Esophagus muscularis mucosa (tissue), 4 donors: ENCODE measurements at regions of chr6 and their contacts with region 1.

Region 1: GRCh38 chr6:139334806-139335446 is 39.5 kb downstream of the CITED2 start:
- DNase-seq: no peak
- H3K4me3 ChIP-seq: no peak overlapping the region
- H3K27ac ChIP-seq: peak overlapping the region; percentile 6 to 60 (median 50)
- H3K4me1 ChIP-seq: peaks cover 2 to 26% (median 20%) of the 10 kb centered on the region in 4 donors
- H3K27me3 ChIP-seq: no peaks in the 10 kb centered on the region
- CTCF ChIP-seq: no peak
- EP300 ChIP-seq: no peak
- POLR2A ChIP-seq: no peak

Region 2: GRCh38 chr6:139296927-139297326 is 38.0 kb before region 1 on chr6:
- intact Hi-C with region 1: loop called (anchors 5 kb)
- DNase-seq: no peak
- H3K4me3 ChIP-seq: no peak overlapping the region
- H3K27ac ChIP-seq: no peak overlapping the region
- H3K4me1 ChIP-seq: peaks cover 10 to 11% (median 10%) of the 10 kb centered on the region in 4 donors
- H3K27me3 ChIP-seq: no peaks in the 10 kb centered on the region
- CTCF ChIP-seq: no peak
- EP300 ChIP-seq: no peak
- POLR2A ChIP-seq: no peak

Region 3: GRCh38 chr6:139392794-139393193 is 57.9 kb after region 1 on chr6:
- intact Hi-C with region 1: no loop called
- DNase-seq: no peak
- H3K4me3 ChIP-seq: no peak overlapping the region
- H3K27ac ChIP-seq: no peak overlapping the region
- H3K4me1 ChIP-seq: no peaks in the 10 kb centered on the region
- H3K27me3 ChIP-seq: no peaks in the 10 kb centered on the region
- CTCF ChIP-seq: no peak
- EP300 ChIP-seq: no peak
- POLR2A ChIP-seq: no peak

Region 4: DNA sequence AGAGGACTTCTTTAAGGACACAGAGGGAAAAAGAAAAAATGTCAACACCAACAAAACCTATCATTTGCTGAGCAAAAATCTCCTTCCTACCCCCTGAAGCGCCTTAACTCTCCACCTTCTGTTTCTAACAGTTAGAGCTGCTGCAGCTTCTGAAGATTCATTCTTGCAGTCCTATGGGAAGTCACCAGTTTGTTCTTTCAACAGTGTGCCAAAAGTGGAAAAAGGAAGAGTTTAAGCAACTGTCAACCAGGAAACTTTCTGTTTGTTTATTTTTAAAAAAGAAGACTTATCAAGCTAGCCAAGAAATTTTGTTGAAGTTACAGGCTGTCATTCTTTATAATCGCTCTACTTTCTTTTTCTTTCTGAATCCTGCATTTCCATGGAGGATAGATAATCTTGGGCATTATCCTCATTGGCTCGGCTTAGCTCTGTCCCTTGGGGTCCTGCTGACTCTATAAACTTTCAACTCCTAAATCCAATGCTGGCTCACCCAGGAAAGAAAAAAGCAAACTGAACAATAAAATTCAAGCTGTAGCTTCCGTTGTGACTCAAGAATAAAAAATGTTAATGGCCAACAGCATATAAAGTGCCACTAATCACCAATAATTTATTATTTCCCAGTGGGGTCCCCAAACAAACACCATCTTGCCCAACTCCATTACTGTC is 212.3 kb after region 1 on chr6:
- intact Hi-C with region 1: no loop called
- DNase-seq: no peak
- H3K4me3 ChIP-seq: peak overlapping the region in 1 of 4 donors; percentile 14
- H3K27ac ChIP-seq: peak overlapping the region; percentile 47 to 64 (median 58)
- H3K4me1 ChIP-seq: peaks cover 5 to 49% (median 46%) of the 10 kb centered on the region in 4 donors
- H3K27me3 ChIP-seq: no peaks in the 10 kb centered on the region
- CTCF ChIP-seq: no peak
- EP300 ChIP-seq: no peak
- POLR2A ChIP-seq: no peak